Activated T-helper 1 cell treated with anti-CD3 and anti-CD28 coated beads, Interleukin-12 subunit alpha, Interleukin-12 subunit beta, Interleukin-2, Interleukin-4 antibody, amounts not matched to agents 30 ng/mL and 10 ng/mL and 1 ng/mL, durations not matched to agents 14 hours and 24 hours and 36 hours (primary cell): ENCODE measurements at regions of chr3 and their contacts with region 1.

Region 1: GRCh38 chr3:14921078-14921616 is 26.2 kb upstream of the NR2C2 start:
- DNase-seq: peak; percentile 71
- H3K4me3 Mint-ChIP-seq: no peak overlapping the region
- H3K27ac Mint-ChIP-seq: no peak overlapping the region
- H3K4me1 Mint-ChIP-seq: no peaks in the 10 kb centered on the region
- H3K27me3 Mint-ChIP-seq: peaks cover 5% of the 10 kb centered on the region

Region 2: GRCh38 chr3:14261229-14261628 is 659.9 kb before region 1 on chr3:
- intact Hi-C with region 1: loop called (anchors 2 kb)
- DNase-seq: peak; percentile 56
- H3K4me3 Mint-ChIP-seq: no peak overlapping the region
- H3K27ac Mint-ChIP-seq: no peak overlapping the region
- H3K4me1 Mint-ChIP-seq: no peaks in the 10 kb centered on the region
- H3K27me3 Mint-ChIP-seq: peaks cover 11% of the 10 kb centered on the region

Region 3: GRCh38 chr3:14633819-14634424 is 287.2 kb before region 1 on chr3:
- intact Hi-C with region 1: loop called (anchors 1 kb)
- DNase-seq: peak; percentile 20
- H3K4me3 Mint-ChIP-seq: no peak overlapping the region
- H3K27ac Mint-ChIP-seq: no peak overlapping the region
- H3K4me1 Mint-ChIP-seq: no peaks in the 10 kb centered on the region
- H3K27me3 Mint-ChIP-seq: peaks cover 18% of the 10 kb centered on the region

Region 4: DNA sequence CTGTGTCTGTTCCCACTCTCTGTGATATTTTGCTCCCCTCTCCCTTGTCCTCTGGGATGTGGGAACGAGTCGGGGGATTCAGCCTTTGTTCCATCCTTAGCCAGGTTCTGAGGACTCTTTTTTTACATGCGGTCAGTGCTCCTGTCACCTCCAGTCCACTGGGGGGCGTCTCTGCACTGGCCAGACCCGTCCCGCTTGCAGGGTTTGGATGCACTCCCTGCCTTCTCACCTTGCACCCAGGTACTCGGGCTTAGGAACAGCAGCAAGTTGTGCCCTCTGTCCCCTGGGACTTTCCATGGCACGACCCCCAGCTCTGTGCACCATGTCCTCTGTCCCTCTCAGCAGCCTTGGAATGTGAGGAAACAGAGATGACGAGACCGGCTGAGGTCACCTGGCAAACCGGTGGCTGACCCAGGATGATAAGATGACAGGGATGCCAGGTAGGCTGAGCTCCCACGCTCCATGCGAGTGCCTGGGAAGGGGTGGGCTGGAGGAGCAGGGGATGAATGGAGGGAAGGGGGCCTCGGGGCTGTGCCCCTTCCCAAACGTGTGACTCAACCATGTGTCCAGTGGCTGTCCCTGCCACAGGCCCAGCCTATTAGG is 129.7 kb before region 1 on chr3:
- intact Hi-C with region 1: loop called (anchors 1 kb)
- DNase-seq: peak; percentile 40
- H3K4me3 Mint-ChIP-seq: no peak overlapping the region
- H3K27ac Mint-ChIP-seq: no peak overlapping the region
- H3K4me1 Mint-ChIP-seq: no peaks in the 10 kb centered on the region
- H3K27me3 Mint-ChIP-seq: peaks cover 9% of the 10 kb centered on the region